ENCODE measurements at regions of chr3 and their contacts with region 1.

Region 1: DNA sequence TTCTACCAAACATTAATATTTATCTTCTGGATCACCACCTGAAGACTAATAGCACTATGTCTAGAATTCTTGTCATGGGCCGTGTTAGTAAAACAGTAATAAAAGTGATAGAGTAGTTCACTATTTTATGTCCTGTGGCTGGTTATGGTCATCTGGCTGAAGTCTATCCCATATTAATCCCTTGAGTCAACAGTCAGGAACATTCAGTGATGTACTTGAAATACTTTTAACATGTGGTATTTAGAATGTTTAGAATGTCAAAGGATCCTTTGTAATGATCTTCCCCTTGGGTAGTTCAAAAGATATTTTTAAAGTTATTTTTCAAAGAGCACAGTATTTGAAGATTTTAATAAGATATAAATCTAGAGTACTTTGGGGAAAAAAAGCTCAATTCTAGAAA is 117.0 kb downstream of the MBNL1 start:
- DNase-seq: no peak
- ATAC-seq: no peak
- H3K4me3 ChIP-seq: no peak overlapping the region
- H3K4me3 Mint-ChIP-seq: no peak overlapping the region
- H3K27ac ChIP-seq: no peak overlapping the region
- H3K27ac Mint-ChIP-seq: peak overlapping the region; percentile 71
- H3K4me1 ChIP-seq: peaks cover 22% of the 10 kb centered on the region
- H3K4me1 Mint-ChIP-seq: peaks cover 88% of the 10 kb centered on the region
- H3K27me3 ChIP-seq: no peaks in the 10 kb centered on the region
- H3K27me3 Mint-ChIP-seq: no peaks in the 10 kb centered on the region
- CTCF ChIP-seq: no peak

Region 2: GRCh38 chr3:152331018-152331541 is 54.7 kb before region 1 on chr3:
- CTCF ChIA-PET with region 1: no interaction called
- POLR2A ChIA-PET with region 1: no interaction called
- intact Hi-C with region 1: loop called in 1 of 2 experiments (anchors 5 kb)
- DNase-seq: no peak
- ATAC-seq: no peak
- H3K4me3 ChIP-seq: no peak overlapping the region
- H3K4me3 Mint-ChIP-seq: peak overlapping the region; percentile 40
- H3K27ac ChIP-seq: peak overlapping the region; percentile 0 to 12
- H3K27ac Mint-ChIP-seq: peak overlapping the region; percentile 47
- H3K4me1 ChIP-seq: peaks cover 36% of the 10 kb centered on the region
- H3K4me1 Mint-ChIP-seq: peaks cover 92% of the 10 kb centered on the region
- H3K27me3 ChIP-seq: no peaks in the 10 kb centered on the region
- H3K27me3 Mint-ChIP-seq: no peaks in the 10 kb centered on the region
- CTCF ChIP-seq: no peak

Region 3: GRCh38 chr3:152349392-152349791 is 36.4 kb before region 1 on chr3:
- CTCF ChIA-PET with region 1: no interaction called
- POLR2A ChIA-PET with region 1: no interaction called
- intact Hi-C with region 1: loop called in 1 of 2 experiments (anchors 5 kb)
- DNase-seq: no peak
- ATAC-seq: no peak
- H3K4me3 ChIP-seq: no peak overlapping the region
- H3K4me3 Mint-ChIP-seq: no peak overlapping the region
- H3K27ac ChIP-seq: no peak overlapping the region
- H3K27ac Mint-ChIP-seq: no peak overlapping the region
- H3K4me1 ChIP-seq: peaks cover 10% of the 10 kb centered on the region
- H3K4me1 Mint-ChIP-seq: peaks cover 38% of the 10 kb centered on the region
- H3K27me3 ChIP-seq: no peaks in the 10 kb centered on the region
- H3K27me3 Mint-ChIP-seq: no peaks in the 10 kb centered on the region
- CTCF ChIP-seq: no peak

Region 4: DNA sequence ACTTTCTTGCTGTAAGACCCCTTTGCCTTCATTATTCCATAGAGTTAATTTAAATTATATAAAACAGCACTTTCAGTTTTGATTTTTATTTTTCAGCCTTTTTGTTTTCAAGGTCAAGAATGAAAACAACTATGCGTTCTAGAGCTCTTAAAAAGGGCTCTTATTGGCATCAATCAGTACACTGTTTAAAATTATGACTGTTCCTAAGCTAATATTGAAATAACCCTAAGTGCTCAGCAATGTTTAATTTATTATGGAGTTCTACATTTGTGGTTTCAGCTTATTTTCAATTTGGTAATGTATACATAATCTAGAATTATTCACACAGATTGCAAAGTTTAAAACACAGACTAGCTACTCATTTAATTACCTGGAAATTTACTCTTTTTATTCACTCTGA is 62.3 kb after region 1 on chr3:
- CTCF ChIA-PET with region 1: no interaction called
- POLR2A ChIA-PET with region 1: no interaction called
- intact Hi-C with region 1: no loop called
- DNase-seq: no peak
- ATAC-seq: no peak
- H3K4me3 ChIP-seq: no peak overlapping the region
- H3K4me3 Mint-ChIP-seq: no peak overlapping the region
- H3K27ac ChIP-seq: no peak overlapping the region
- H3K27ac Mint-ChIP-seq: peak overlapping the region; percentile 73
- H3K4me1 ChIP-seq: peaks cover 17% of the 10 kb centered on the region
- H3K4me1 Mint-ChIP-seq: peaks cover 75% of the 10 kb centered on the region
- H3K27me3 ChIP-seq: no peaks in the 10 kb centered on the region
- H3K27me3 Mint-ChIP-seq: no peaks in the 10 kb centered on the region
- CTCF ChIP-seq: no peak